H1 (cell line): ENCODE measurements at regions of chr20 and their contacts with region 1.

Region 1: DNA sequence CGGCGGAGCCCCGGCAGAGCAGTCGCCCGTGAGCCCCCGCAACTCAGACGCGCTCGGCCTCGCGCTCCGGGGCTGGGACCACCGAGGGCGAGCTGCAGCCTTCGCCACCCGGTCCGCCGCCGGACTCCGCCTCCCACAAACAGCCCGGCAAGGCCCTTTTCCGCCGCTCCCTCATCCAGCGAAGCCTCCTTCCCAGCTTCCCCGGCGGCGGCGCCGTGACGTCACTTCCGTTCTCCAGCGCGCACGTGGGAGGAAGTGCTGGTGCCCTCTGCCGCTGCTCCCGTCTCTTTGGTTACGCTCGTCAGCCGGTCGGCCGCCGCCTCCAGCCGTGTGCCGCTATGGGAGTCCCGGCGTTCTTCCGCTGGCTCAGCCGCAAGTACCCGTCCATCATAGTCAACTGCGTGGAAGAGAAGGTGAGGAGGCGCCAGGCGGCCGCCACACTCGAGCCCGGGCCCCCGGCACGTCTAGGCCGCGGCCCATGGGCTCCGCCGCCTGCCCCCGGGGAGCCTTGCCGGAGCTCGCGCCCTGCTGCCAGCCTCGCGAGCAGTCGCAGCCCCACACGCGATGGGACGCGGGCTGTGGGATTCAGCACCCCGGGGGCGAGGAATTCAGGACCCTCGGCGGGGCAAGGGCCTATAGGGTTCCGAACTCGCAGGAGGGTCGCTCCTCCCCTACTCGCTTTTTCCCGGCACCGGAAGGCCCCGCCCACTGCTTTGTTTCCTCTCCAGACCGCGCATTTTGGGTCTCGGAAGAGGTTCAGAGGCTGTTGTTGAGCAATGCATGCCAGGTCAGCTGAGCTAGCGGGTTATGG is at the start of gene XRN2:
- DNase-seq: peak; percentile 72 to 98
- H3K4me3 ChIP-seq: peak within 1 kb of the TSS; percentile 77 to 94 (median 86)
- H3K27ac ChIP-seq: peak within 1 kb of the TSS; percentile 98
- H3K4me1 ChIP-seq: peaks cover 0 to 3% (median 1%) of the 10 kb centered on the region in 4 experiments; a peak in 3 of 7 replicates
- H3K27me3 ChIP-seq: no peaks in the 10 kb centered on the region
- CTCF ChIP-seq: no peak
- EP300 ChIP-seq: no peak; a peak in 1 of 3 replicates
- POLR2A ChIP-seq: peak; percentile 93 to 95
- RAD21 ChIP-seq: no peak
- total RNA-seq, gene XRN2: 136 and 139 TPM in 2 replicates

Region 2: GRCh38 chr20:20946122-20946759 is 357.0 kb before region 1 on chr20:
- CTCF ChIA-PET with region 1: no interaction called
- POLR2A ChIA-PET with region 1: no interaction called
- DNase-seq: no peak
- H3K4me3 ChIP-seq: no peak overlapping the region
- H3K27ac ChIP-seq: no peak overlapping the region
- H3K4me1 ChIP-seq: no peaks in the 10 kb centered on the region
- H3K27me3 ChIP-seq: no peaks in the 10 kb centered on the region
- CTCF ChIP-seq: no peak
- EP300 ChIP-seq: no peak
- POLR2A ChIP-seq: no peak
- RAD21 ChIP-seq: no peak

Region 3: GRCh38 chr20:21099751-21100577 is 203.3 kb before region 1 on chr20:
- CTCF ChIA-PET with region 1: no interaction called
- POLR2A ChIA-PET with region 1: interaction called, 13 read pairs
- DNase-seq: peak in 1 of 2 experiments; percentile 68
- H3K4me3 ChIP-seq: peak overlapping the region; percentile 44 to 78 (median 64)
- H3K27ac ChIP-seq: no peak overlapping the region
- H3K4me1 ChIP-seq: peaks cover 10 to 23% (median 17%) of the 10 kb centered on the region in 4 experiments
- H3K27me3 ChIP-seq: peaks cover 26 to 84% (median 74%) of the 10 kb centered on the region in 4 experiments
- CTCF ChIP-seq: no peak
- EP300 ChIP-seq: no peak
- POLR2A ChIP-seq: no peak
- RAD21 ChIP-seq: no peak

Region 4: GRCh38 chr20:21291026-21291425 is 12.2 kb before region 1 on chr20:
- CTCF ChIA-PET with region 1: interaction called, 5 read pairs
- POLR2A ChIA-PET with region 1: interaction called, 17 read pairs
- DNase-seq: no peak
- H3K4me3 ChIP-seq: no peak overlapping the region
- H3K27ac ChIP-seq: no peak overlapping the region
- H3K4me1 ChIP-seq: no peaks in the 10 kb centered on the region
- H3K27me3 ChIP-seq: no peaks in the 10 kb centered on the region
- CTCF ChIP-seq: no peak
- EP300 ChIP-seq: no peak
- POLR2A ChIP-seq: no peak
- RAD21 ChIP-seq: no peak

Region 5: DNA sequence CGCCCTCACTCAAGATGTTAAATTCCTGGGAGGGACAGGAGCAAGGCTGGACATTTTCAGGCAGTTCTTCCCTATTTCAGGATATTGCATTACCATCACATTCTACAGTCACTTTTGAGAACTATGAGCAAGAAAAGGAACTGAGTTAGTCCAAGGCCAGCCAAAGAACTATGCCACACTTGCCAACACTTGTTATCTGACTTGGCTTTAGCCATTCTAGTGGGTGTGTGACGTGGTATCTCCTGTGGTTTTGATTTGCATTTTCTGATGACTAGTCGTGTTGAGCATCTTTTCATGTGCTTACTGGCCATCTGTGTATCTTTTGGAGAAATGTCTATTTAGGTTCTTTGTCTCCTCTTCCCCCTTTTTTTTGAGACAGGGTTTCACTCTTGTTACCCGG is 11.9 kb after region 1 on chr20:
- CTCF ChIA-PET with region 1: interaction called, 4 read pairs
- POLR2A ChIA-PET with region 1: interaction called, 17 read pairs
- DNase-seq: no peak
- H3K4me3 ChIP-seq: no peak overlapping the region
- H3K27ac ChIP-seq: no peak overlapping the region
- H3K4me1 ChIP-seq: peaks cover 0 to 12% (median 0%) of the 10 kb centered on the region in 4 experiments; a peak in 1 of 7 replicates
- H3K27me3 ChIP-seq: no peaks in the 10 kb centered on the region
- CTCF ChIP-seq: no peak
- EP300 ChIP-seq: no peak
- POLR2A ChIP-seq: no peak
- RAD21 ChIP-seq: no peak

Region 6: GRCh38 chr20:21323640-21324039 is 20.4 kb after region 1 on chr20:
- CTCF ChIA-PET with region 1: no interaction called
- POLR2A ChIA-PET with region 1: interaction called, 17 read pairs
- DNase-seq: no peak
- H3K4me3 ChIP-seq: no peak overlapping the region
- H3K27ac ChIP-seq: no peak overlapping the region
- H3K4me1 ChIP-seq: peaks cover 1 to 10% (median 9%) of the 10 kb centered on the region in 4 experiments; a peak in 5 of 7 replicates
- H3K27me3 ChIP-seq: no peaks in the 10 kb centered on the region
- CTCF ChIP-seq: no peak
- EP300 ChIP-seq: no peak
- POLR2A ChIP-seq: no peak
- RAD21 ChIP-seq: no peak